ENCODE measurements at regions of chr7 and their contacts with region 1.

Region 1: GRCh38 chr7:101244375-101245146 is at the start of gene FIS1:
- DNase-seq: peak; percentile 87 to 93 (median 88)
- H3K4me3 ChIP-seq: peak within 1 kb of the TSS; percentile 68 to 97 (median 78)
- H3K4me3 Mint-ChIP-seq: peak within 1 kb of the TSS; percentile 96 to 97
- H3K27ac ChIP-seq: peak within 1 kb of the TSS; percentile 67 to 96
- H3K27ac Mint-ChIP-seq: peak within 1 kb of the TSS; percentile 90 to 98 (median 96)
- H3K4me1 ChIP-seq: peaks cover 37 to 48% of the 10 kb centered on the region in 2 donors
- H3K4me1 Mint-ChIP-seq: peaks cover 39% of the 10 kb centered on the region
- H3K27me3 ChIP-seq: no peaks in the 10 kb centered on the region
- H3K27me3 Mint-ChIP-seq: peaks cover 0 to 2% (median 0%) of the 10 kb centered on the region in 3 donors
- CTCF ChIP-seq: peak; percentile 98
- polyA plus RNA-seq, gene FIS1: 152 to 198 (median 195) TPM

Region 2: DNA sequence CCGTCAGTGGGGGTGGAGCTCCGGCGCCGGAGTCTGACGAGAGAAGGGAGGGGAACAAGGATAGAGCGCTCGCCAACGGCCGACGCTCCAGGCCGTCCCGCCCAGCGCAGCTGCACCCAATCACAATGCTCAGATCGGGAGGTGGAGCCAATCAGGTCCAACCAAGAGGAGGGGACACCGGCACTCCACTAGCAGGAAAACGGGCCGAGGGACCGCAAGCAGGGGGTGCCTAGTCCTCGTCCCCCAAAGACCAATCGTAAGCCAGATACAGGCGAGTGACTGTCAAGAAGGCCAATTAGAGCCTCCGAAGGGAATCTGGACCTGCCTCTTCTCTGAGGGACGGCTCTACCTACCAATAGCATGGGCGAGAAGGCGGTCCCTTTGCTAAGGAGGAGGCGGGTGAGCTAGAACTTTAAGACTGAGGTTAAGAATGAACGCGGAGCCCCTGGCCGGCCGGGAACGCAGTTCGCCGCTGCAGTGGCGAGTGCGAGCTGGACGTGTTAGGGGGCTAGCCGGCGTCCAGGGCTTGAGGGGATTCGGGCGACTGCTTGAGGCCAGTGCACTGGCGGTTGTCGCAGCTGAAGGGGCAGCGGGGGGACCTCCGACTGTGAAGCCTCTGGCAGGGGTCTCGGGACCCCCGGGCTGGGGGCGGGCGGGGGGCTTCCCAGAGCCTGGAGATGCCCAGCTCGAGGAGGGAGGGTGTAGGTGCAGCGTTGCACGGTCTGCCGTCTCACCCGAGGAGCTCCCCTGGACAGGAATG is 658.1 kb before region 1 on chr7 and contains the start of gene FBXO24:
- intact Hi-C with region 1: loop called in 1 of 2 experiments (anchors 10 kb)
- DNase-seq: peak; percentile 100
- H3K4me3 ChIP-seq: peak within 1 kb of the TSS; percentile 77 to 100 (median 93)
- H3K4me3 Mint-ChIP-seq: peak within 1 kb of the TSS; percentile 93 to 99
- H3K27ac ChIP-seq: peak within 1 kb of the TSS; percentile 84 to 88
- H3K27ac Mint-ChIP-seq: peak within 1 kb of the TSS; percentile 93 to 98 (median 98)
- H3K4me1 ChIP-seq: peaks cover 40 to 52% of the 10 kb centered on the region in 2 donors
- H3K4me1 Mint-ChIP-seq: peaks cover 48% of the 10 kb centered on the region
- H3K27me3 ChIP-seq: peaks cover 0 to 14% of the 10 kb centered on the region in 2 donors
- H3K27me3 Mint-ChIP-seq: peaks cover 11 to 23% (median 17%) of the 10 kb centered on the region in 3 donors
- CTCF ChIP-seq: no peak
- polyA plus RNA-seq, gene FBXO24: 0.42 to 1.2 (median 0.69) TPM

Region 3: GRCh38 chr7:101217388-101218235 is 26.9 kb before region 1 on chr7 and contains the starts of genes PLOD3 and ZNHIT1:
- intact Hi-C with region 1: loop called (anchors 2 kb)
- DNase-seq: peak; percentile 96 to 100 (median 97)
- H3K4me3 ChIP-seq: peak within 1 kb of the TSS; percentile 66 to 100 (median 73)
- H3K4me3 Mint-ChIP-seq: peak within 1 kb of the TSS; percentile 91 to 94
- H3K27ac ChIP-seq: peak within 1 kb of the TSS; percentile 81 to 90
- H3K27ac Mint-ChIP-seq: peak within 1 kb of the TSS; percentile 91 to 97 (median 95)
- H3K4me1 ChIP-seq: peaks cover 24 to 37% of the 10 kb centered on the region in 2 donors
- H3K4me1 Mint-ChIP-seq: peaks cover 32% of the 10 kb centered on the region
- H3K27me3 ChIP-seq: no peaks in the 10 kb centered on the region
- H3K27me3 Mint-ChIP-seq: peaks cover 0 to 2% (median 0%) of the 10 kb centered on the region in 3 donors
- CTCF ChIP-seq: peak; percentile 23
- polyA plus RNA-seq, gene PLOD3: 26.9 to 70.1 (median 28.1) TPM
- polyA plus RNA-seq, gene ZNHIT1: 29.3 to 109 (median 74.9) TPM